Activated CD4-positive, alpha-beta T cell treated with anti-CD3 and anti-CD28 coated beads for 36 hours (primary cell): ENCODE measurements at regions of chr3 and their contacts with region 1.

Region 1: GRCh38 chr3:59502806-59503205 is 453.0 kb upstream of the CFAP20DC start:
- DNase-seq: peak; percentile 71
- ATAC-seq: peak; percentile 97
- H3K4me3 Mint-ChIP-seq: no peak overlapping the region
- H3K27ac Mint-ChIP-seq: no peak overlapping the region
- H3K4me1 Mint-ChIP-seq: peaks cover 10% of the 10 kb centered on the region
- H3K27me3 Mint-ChIP-seq: no peaks in the 10 kb centered on the region

Region 2: GRCh38 chr3:59480486-59480995 is 22.3 kb before region 1 on chr3:
- CTCF ChIA-PET with region 1: interaction called, 3 read pairs
- POLR2A ChIA-PET with region 1: interaction called, 4 read pairs
- intact Hi-C with region 1: loop called in 1 of 2 experiments (anchors 2 kb)
- DNase-seq: peak; percentile 31
- ATAC-seq: peak; percentile 65
- H3K4me3 Mint-ChIP-seq: peak overlapping the region; percentile 6
- H3K27ac Mint-ChIP-seq: peak overlapping the region; percentile 39
- H3K4me1 Mint-ChIP-seq: peaks cover 13% of the 10 kb centered on the region
- H3K27me3 Mint-ChIP-seq: no peaks in the 10 kb centered on the region